HepG2 (cell line): ENCODE measurements at regions of chr20 and their contacts with region 1.

Region 1: GRCh38 chr20:10553326-10553984 is 118.3 kb downstream of the SLX4IP start:
- DNase-seq: peak; percentile 84
- ATAC-seq: peak; percentile 70
- H3K4me3 ChIP-seq: no peak overlapping the region
- H3K27ac ChIP-seq: peak overlapping the region; percentile 7
- H3K4me1 ChIP-seq: peaks cover 79% of the 10 kb centered on the region
- H3K27me3 ChIP-seq: no peaks in the 10 kb centered on the region
- CTCF ChIP-seq: peak; percentile 96
- EP300 ChIP-seq: no peak
- POLR2A ChIP-seq: no peak
- RAD21 ChIP-seq: peak; percentile 97

Region 2: DNA sequence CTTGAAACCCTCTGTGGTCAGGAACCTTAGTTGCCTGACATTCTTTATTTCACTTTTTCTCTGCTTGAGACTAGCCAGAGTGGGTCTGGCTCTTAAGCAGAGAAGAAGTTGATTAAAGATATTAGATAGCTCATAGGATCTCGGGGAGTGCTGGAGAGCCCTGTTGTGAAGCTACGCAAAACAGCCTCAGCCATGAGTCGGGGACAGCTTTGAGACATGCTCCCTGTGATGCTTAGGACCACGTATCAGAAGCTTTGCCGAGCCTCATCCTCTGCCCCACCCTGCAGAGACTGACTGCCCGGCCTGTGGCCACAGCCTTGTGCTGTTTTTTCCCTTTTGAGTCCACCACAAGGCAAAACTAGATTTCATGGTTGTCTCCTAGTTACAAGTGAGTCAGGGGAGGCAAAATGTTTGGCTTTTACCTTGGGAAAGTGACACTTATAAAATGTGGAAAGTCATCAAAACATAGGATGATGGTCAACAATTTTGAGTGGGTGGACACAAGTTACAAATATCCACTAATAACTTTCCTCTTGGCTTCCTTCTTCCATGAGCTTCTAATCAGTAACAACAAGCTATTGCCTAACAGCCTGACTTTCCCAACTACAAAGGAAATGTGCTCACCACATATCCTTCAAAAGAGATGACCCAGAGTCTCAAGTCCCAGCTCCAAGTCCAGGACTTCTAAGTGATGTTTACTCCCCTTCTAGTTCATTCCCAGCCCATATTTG is 11.9 kb after region 1 on chr20:
- CTCF ChIA-PET with region 1: no interaction called
- POLR2A ChIA-PET with region 1: interaction called, 34 read pairs
- in situ Hi-C with region 1: no loop called
- intact Hi-C with region 1: loop called (anchors 1 kb)
- DNase-seq: peak; percentile 99
- ATAC-seq: peak; percentile 82
- H3K4me3 ChIP-seq: peak overlapping the region in 1 of 3 experiments; percentile 16; a peak in 1 of 6 replicates
- H3K27ac ChIP-seq: peak overlapping the region; percentile 97
- H3K4me1 ChIP-seq: peaks cover 62% of the 10 kb centered on the region
- H3K27me3 ChIP-seq: no peaks in the 10 kb centered on the region
- CTCF ChIP-seq: no peak
- EP300 ChIP-seq: peak; percentile 91 to 100
- POLR2A ChIP-seq: peak; percentile 24 to 49; a peak in 2 of 4 replicates
- RAD21 ChIP-seq: 0 out of 2 replicates have a peak, but pooled peaks have one; percentile 12

Region 3: GRCh38 chr20:10636326-10636818 is 82.9 kb after region 1 on chr20:
- CTCF ChIA-PET with region 1: interaction called, 6 read pairs
- POLR2A ChIA-PET with region 1: no interaction called
- in situ Hi-C with region 1: loop called (anchors 5 kb)
- intact Hi-C with region 1: loop called (anchors 2 kb)
- DNase-seq: peak; percentile 35
- ATAC-seq: peak; percentile 19
- H3K4me3 ChIP-seq: no peak overlapping the region
- H3K27ac ChIP-seq: no peak overlapping the region
- H3K4me1 ChIP-seq: no peaks in the 10 kb centered on the region
- H3K27me3 ChIP-seq: no peaks in the 10 kb centered on the region
- CTCF ChIP-seq: 0 out of 2 replicates have a peak, but pooled peaks have one; percentile 27
- EP300 ChIP-seq: no peak
- POLR2A ChIP-seq: no peak
- RAD21 ChIP-seq: no peak

Region 4: DNA sequence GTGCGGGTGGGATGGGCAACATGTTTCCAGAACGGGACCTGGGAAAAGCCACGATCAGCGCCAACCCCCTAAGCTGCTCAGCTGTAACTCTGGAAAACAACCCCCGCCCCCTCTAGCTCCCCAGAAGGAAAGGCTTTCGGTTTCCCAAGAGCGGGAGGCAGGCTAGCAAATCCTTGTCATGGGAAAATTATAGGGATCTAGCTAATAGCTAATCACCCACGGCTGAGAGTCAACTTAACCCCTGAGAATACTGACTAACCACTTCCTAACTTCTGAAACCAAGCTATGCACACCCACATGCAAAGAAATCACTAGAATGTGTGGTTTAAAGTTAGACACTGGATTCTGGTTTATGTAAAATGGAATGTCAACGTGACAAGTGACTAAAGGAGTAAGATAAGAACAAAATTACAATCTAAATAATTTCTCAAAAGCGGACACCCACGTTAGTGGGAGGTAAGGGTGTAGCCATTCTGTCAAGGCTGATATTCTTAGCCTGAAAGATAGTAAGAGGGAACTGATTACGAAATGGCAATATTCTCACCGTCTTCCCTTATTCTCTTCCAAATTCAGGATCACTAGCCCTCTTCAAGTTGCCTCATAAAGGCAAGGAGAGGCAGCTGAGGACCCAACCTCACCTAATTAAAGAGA is 100.3 kb after region 1 on chr20:
- CTCF ChIA-PET with region 1: no interaction called
- POLR2A ChIA-PET with region 1: no interaction called
- in situ Hi-C with region 1: no loop called
- intact Hi-C with region 1: loop called (anchors 1 kb)
- DNase-seq: no peak
- ATAC-seq: no peak
- H3K4me3 ChIP-seq: no peak overlapping the region
- H3K27ac ChIP-seq: peak overlapping the region; percentile 69
- H3K4me1 ChIP-seq: peaks cover 40% of the 10 kb centered on the region
- H3K27me3 ChIP-seq: no peaks in the 10 kb centered on the region
- CTCF ChIP-seq: no peak
- EP300 ChIP-seq: no peak
- POLR2A ChIP-seq: no peak
- RAD21 ChIP-seq: no peak

Region 5: GRCh38 chr20:10826111-10826510 is 272.7 kb after region 1 on chr20:
- CTCF ChIA-PET with region 1: no interaction called
- POLR2A ChIA-PET with region 1: no interaction called
- in situ Hi-C with region 1: no loop called
- intact Hi-C with region 1: loop called (anchors 10 kb)
- DNase-seq: no peak
- ATAC-seq: no peak
- H3K4me3 ChIP-seq: no peak overlapping the region
- H3K27ac ChIP-seq: no peak overlapping the region
- H3K4me1 ChIP-seq: no peaks in the 10 kb centered on the region
- H3K27me3 ChIP-seq: peaks cover 0 to 6% of the 10 kb centered on the region in 2 experiments; a peak in 2 of 5 replicates
- CTCF ChIP-seq: no peak
- EP300 ChIP-seq: no peak
- POLR2A ChIP-seq: no peak
- RAD21 ChIP-seq: no peak

Region 6: GRCh38 chr20:11098888-11099287 is 545.4 kb after region 1 on chr20:
- CTCF ChIA-PET with region 1: no interaction called
- POLR2A ChIA-PET with region 1: no interaction called
- in situ Hi-C with region 1: no loop called
- intact Hi-C with region 1: loop called (anchors 1 kb)
- DNase-seq: no peak
- ATAC-seq: peak; percentile 75
- H3K4me3 ChIP-seq: no peak overlapping the region
- H3K27ac ChIP-seq: no peak overlapping the region
- H3K4me1 ChIP-seq: no peaks in the 10 kb centered on the region
- H3K27me3 ChIP-seq: no peaks in the 10 kb centered on the region
- CTCF ChIP-seq: peak; percentile 43; the same call in 1 of the 2 replicates
- EP300 ChIP-seq: no peak
- POLR2A ChIP-seq: no peak
- RAD21 ChIP-seq: no peak

Region 7: GRCh38 chr20:11274141-11274594 is 720.7 kb after region 1 on chr20:
- CTCF ChIA-PET with region 1: interaction called, 14 read pairs
- POLR2A ChIA-PET with region 1: no interaction called
- in situ Hi-C with region 1: loop called (anchors 5 kb)
- intact Hi-C with region 1: loop called (anchors 1 kb)
- DNase-seq: peak; percentile 75
- ATAC-seq: peak; percentile 91
- H3K4me3 ChIP-seq: no peak overlapping the region
- H3K27ac ChIP-seq: no peak overlapping the region
- H3K4me1 ChIP-seq: no peaks in the 10 kb centered on the region
- H3K27me3 ChIP-seq: peaks cover 0 to 8% of the 10 kb centered on the region in 2 experiments; a peak in 1 of 5 replicates
- CTCF ChIP-seq: peak; percentile 91
- EP300 ChIP-seq: no peak
- POLR2A ChIP-seq: no peak
- RAD21 ChIP-seq: peak; percentile 83

Region 8: DNA sequence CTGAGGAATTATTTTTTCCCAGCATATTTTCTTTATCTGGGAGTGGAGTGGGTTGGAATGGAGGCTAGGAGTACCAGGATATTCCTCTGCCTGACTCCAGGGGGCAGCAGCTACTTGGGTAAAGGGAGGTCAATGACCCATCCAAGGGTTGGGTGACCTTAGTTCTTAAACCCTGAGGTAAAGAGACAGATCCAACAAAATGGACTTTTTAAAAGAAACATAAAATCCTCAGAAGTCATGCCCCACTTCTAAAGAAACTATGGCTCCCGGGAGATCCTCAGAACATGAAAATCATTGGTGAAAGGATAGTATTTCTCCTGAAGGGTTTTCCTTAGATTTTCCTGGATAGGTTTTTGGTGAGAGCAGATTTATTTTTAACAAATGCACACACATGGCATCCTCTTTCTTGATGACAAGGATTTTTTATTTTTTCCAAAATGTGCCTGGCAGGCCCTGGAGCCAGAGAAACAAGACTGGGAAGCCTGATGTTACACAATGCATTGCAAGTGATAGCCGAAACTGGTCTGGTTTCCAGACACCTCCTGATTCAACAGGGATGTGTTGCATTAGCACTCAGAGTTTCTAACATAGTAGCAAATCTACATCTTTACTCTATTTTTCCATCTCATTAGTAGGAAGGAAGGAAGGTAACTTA is 1123.3 kb after region 1 on chr20:
- CTCF ChIA-PET with region 1: no interaction called
- POLR2A ChIA-PET with region 1: no interaction called
- in situ Hi-C with region 1: no loop called
- intact Hi-C with region 1: no loop called
- DNase-seq: peak; percentile 62
- ATAC-seq: peak; percentile 99
- H3K4me3 ChIP-seq: no peak overlapping the region
- H3K27ac ChIP-seq: no peak overlapping the region
- H3K4me1 ChIP-seq: no peaks in the 10 kb centered on the region
- H3K27me3 ChIP-seq: no peaks in the 10 kb centered on the region
- CTCF ChIP-seq: peak; percentile 89
- EP300 ChIP-seq: no peak
- POLR2A ChIP-seq: no peak
- RAD21 ChIP-seq: peak; percentile 87